ENCODE measurements at regions of chr19 and their contacts with region 1.

Region 1: GRCh38 chr19:4208385-4209094 is 20.8 kb upstream of the EBI3 start:
- DNase-seq: no peak
- ATAC-seq: no peak

Region 2: GRCh38 chr19:3984908-3985642 is 223.5 kb before region 1 on chr19 and contains the start of gene EEF2:
- intact Hi-C with region 1: loop called (anchors 5 kb)
- DNase-seq: peak; percentile 93
- ATAC-seq: peak; percentile 79
- total RNA-seq, gene EEF2: 1,974 TPM

Region 3: GRCh38 chr19:4297901-4298809 is 89.6 kb after region 1 on chr19:
- intact Hi-C with region 1: no loop called
- DNase-seq: no peak
- ATAC-seq: no peak

Region 4: DNA sequence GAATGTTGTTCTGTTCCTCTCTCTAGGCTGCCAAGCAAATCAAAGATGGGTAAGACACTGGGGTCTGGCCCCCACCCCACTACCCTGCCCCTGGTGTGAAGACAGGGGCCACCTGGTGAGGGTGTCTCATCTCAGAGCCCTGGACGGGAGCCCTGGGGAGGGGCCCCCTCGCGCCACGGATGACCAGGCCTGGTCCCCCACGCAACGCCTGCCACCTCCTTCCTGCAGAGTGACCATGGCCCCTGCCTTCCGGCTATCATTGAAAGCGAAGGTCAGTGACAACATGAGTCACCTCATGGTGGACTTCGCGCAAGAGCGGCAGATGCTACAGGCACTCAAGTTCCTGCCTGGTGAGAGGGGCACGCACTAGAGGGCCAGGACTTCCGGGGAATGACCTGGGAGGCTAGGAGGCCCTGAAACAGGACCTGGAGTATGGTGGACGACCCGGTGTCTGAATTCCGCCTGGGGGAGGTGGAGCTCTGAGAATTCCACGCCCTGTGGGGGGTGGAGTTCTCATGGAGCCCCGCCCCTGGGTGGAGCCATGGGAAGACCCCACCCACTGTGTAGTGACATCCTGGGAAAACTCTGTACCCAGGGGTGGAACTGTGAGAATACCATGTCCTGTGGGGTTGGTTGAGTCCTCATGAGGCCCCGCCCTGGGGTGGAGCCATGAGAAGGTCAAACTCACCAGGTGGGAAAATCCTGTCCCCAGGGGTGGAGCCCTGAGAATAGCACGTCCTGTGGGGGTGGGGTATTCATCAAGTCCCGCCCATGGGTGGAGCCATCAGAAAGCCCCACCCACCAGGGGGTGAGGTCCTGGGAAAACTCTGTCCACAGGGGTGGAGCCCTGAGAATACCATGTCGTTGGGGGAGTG is 101.9 kb after region 1 on chr19:
- intact Hi-C with region 1: no loop called
- DNase-seq: no peak
- ATAC-seq: no peak

Measured in Right ventricle myocardium superior (tissue), 1 donor.